ENCODE measurements at regions of chr1 and their contacts with region 1.

Region 1: DNA sequence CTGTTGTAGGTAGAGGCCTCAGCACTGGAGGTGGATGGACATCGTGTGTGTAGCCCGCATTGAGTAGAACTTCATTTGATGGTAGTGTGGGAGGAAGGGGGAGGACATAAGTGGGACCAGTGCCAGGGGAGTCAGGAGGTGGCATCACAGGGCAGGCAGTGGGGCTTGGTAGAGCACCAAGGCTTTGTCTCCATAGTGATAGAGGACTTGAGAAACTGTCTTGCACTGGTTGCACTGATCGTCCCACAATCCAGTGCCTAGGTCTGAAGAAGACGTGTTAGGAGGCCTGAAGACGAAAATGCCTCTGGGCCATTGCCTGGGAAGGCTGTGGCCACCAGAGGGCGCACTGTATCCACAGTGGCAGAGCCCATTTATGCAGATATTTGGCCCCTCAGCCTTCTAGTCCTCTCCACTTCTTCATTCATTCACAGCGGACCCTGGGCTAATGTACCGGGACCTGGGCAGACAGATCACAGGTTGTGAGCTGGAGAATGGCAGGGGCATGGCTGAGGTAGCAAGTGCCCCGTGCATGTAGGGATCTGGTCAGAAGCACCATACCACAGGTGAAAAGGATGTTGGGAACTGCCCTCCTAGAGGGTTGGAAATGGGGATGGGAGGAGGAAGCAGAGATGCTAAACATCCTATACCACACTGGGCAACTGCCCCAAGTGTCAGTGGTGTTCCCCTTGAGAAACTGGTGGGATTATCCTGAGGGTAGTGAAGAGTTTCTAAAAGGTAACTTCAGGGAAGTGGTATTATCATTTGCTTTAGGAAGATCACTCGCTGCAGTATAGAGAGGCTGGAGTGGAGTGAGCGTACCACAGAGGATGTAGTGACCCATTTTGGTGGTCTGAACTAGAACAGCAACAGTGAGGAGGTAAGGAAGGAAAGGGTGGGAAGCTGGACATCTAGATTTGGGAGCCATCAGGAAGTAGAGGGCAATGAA is 95.3 kb downstream of the PIK3R3 start:
- DNase-seq: peak; percentile 77
- ATAC-seq: peak; percentile 78
- H3K4me3 ChIP-seq: no peak overlapping the region
- H3K27ac ChIP-seq: no peak overlapping the region
- H3K4me1 ChIP-seq: peaks cover 6% of the 10 kb centered on the region; the same call in 1 of the 2 replicates
- H3K27me3 ChIP-seq: no peaks in the 10 kb centered on the region
- CTCF ChIP-seq: peak; percentile 98
- POLR2A ChIP-seq: no peak
- RAD21 ChIP-seq: peak; percentile 99

Region 2: GRCh38 chr1:46132529-46133180 is 95.5 kb after region 1 on chr1 and contains the start of gene PIK3R3:
- CTCF ChIA-PET with region 1: interaction called, 4 read pairs
- POLR2A ChIA-PET with region 1: no interaction called
- dilution Hi-C with region 1: no loop called
- in situ Hi-C with region 1: no loop called
- intact Hi-C with region 1: loop called (anchors 1 kb)
- DNase-seq: peak; percentile 99
- ATAC-seq: peak; percentile 93
- H3K4me3 ChIP-seq: peak within 1 kb of the TSS; percentile 56
- H3K27ac ChIP-seq: peak within 1 kb of the TSS; percentile 97
- H3K4me1 ChIP-seq: peaks cover 5% of the 10 kb centered on the region
- H3K27me3 ChIP-seq: no peaks in the 10 kb centered on the region
- CTCF ChIP-seq: no peak
- POLR2A ChIP-seq: peak; percentile 99
- RAD21 ChIP-seq: no peak
- total RNA-seq, gene PIK3R3: 9.9 and 14.7 TPM in 2 replicates

Region 3: DNA sequence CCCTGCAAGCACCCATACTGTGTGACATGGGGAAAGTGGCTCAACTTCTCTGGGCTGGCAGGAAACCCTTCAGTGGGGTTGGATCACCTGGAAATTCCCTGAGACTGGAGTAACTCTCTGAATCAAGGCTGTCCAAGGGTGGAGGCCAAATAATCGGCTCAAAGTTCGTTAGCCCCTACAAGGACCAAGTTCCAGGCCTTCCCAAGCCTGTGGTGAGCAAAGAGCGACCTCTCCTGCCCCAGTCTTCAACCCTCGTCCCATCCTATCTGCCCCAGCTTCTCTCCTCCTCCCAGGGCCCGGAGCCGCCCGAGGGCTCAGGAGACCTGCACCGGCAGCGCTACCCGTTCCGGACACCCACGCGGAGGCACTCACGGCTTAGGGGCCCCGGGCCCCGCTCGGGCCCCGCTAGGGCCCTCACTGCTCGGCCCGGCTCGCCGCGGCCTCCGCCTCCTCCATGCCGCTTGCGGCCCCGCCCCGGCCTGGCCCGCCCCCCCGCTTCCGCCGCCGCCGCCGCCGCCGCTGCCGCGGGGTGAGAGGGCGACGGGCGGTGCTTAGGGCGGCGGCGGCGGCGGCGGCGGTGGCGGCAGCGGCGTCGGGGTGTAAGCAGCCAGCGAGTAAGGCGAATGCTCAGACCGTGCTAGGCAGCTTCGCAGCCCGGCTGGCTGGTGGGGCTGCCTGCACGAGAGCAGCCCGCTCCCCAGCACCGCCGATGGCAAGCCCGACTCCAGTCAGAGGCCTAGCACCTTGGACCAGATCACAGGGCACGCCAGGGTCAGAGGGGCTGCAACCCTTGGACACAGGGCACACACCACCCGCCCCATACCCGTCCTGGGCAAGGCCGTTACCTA is 161.0 kb after region 1 on chr1 and contains the start of gene POMGNT1:
- CTCF ChIA-PET with region 1: no interaction called
- POLR2A ChIA-PET with region 1: no interaction called
- dilution Hi-C with region 1: loop called (anchors 25 kb)
- in situ Hi-C with region 1: no loop called
- intact Hi-C with region 1: no loop called
- DNase-seq: peak; percentile 39
- ATAC-seq: peak; percentile 95
- H3K4me3 ChIP-seq: peak within 1 kb of the TSS; percentile 85
- H3K27ac ChIP-seq: peak within 1 kb of the TSS; percentile 90
- H3K4me1 ChIP-seq: peaks cover 4% of the 10 kb centered on the region; the same call in 1 of the 2 replicates
- H3K27me3 ChIP-seq: no peaks in the 10 kb centered on the region
- CTCF ChIP-seq: peak; percentile 18; the same call in 1 of the 2 replicates
- POLR2A ChIP-seq: no peak; the same call in 1 of the 2 replicates
- RAD21 ChIP-seq: peak; percentile 38
- total RNA-seq, gene POMGNT1: 45.3 and 54.8 TPM in 2 replicates

Region 4: DNA sequence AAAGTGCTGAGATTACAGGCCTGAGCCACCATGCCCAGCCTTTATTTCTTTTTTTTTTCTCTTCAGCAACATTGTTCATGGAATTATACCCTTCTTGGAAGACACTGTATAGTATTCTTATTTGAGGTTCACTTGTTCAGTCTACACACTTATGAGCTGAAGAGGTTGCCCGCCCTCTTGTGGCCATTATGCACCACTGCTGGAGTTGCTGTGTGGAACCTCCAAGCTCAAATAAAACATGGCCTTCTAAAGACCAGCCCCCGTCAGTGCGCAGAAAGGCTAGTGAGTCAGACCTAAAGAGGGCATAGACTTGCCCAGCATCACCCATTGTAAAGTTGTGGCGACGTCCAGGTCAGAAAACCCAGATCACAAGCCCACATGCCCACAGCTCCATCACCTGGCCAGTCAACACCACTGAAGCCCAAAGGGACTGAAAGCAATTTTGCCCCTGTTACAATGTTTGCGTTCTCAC is 186.3 kb after region 1 on chr1:
- CTCF ChIA-PET with region 1: interaction called, 4 read pairs
- POLR2A ChIA-PET with region 1: no interaction called
- dilution Hi-C with region 1: no loop called
- in situ Hi-C with region 1: no loop called
- intact Hi-C with region 1: loop called (anchors 1 kb)
- DNase-seq: peak; percentile 93
- ATAC-seq: peak; percentile 98
- H3K4me3 ChIP-seq: no peak overlapping the region
- H3K27ac ChIP-seq: no peak overlapping the region
- H3K4me1 ChIP-seq: peaks cover 1% of the 10 kb centered on the region; the same call in 1 of the 2 replicates
- H3K27me3 ChIP-seq: no peaks in the 10 kb centered on the region
- CTCF ChIP-seq: peak; percentile 91
- POLR2A ChIP-seq: no peak
- RAD21 ChIP-seq: peak; percentile 88

Measured in IMR-90 (cell line).